CD8-positive, alpha-beta T cell (primary cell): ENCODE measurements at regions of chr22 and their contacts with region 1.

Region 1: GRCh38 chr22:37199103-37199759 is 11.2 kb upstream of the C1QTNF6 start:
- DNase-seq: peak; percentile 96 to 100 (median 99)
- ATAC-seq: peak; percentile 92
- H3K4me3 ChIP-seq: peak overlapping the region; percentile 57 to 73
- H3K4me3 Mint-ChIP-seq: peak overlapping the region; percentile 85
- H3K27ac ChIP-seq: peak overlapping the region; percentile 67 to 95
- H3K27ac Mint-ChIP-seq: peak overlapping the region; percentile 95
- H3K4me1 ChIP-seq: peaks cover 61% of the 10 kb centered on the region
- H3K4me1 Mint-ChIP-seq: peaks cover 70% of the 10 kb centered on the region
- H3K27me3 ChIP-seq: no peaks in the 10 kb centered on the region
- H3K27me3 Mint-ChIP-seq: no peaks in the 10 kb centered on the region
- CTCF ChIP-seq: peak; percentile 87

Region 2: DNA sequence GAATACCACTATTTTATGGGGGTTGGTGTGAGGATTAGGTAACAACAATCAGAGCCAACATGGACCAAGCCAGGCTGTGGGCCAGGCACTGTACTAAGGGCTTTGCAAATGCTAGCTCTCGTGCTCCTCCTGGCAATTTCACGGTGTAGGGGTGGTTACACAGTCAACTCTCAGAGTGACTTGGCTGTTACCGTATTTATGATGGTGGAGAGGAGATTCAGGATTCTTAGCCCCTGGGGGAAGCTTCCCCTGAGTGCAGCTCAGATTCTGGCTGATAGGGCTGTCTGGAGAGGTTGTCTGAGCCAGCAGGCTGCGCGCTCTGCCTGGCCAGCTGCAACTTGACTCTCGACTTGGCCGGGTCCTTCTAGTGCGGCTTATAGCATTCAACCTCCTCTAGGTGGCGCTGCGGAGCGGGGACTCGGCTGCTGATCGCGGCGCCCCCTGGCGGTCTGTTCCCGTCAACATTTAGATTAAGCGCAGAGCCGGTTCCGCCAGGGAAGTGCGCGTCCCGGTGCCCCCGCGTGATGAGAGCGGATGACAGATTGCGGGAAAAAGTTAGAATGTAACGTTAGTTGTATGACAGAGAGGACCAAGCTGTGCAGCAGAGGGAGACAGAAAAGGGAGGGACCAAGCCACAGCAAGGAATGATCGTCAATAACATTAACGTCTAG is 343.0 kb before region 1 on chr22:
- CTCF ChIA-PET with region 1: no interaction called
- POLR2A ChIA-PET with region 1: no interaction called
- intact Hi-C with region 1: loop called (anchors 1 to 5 kb)
- DNase-seq: peak; percentile 86 to 99 (median 94)
- ATAC-seq: peak; percentile 78
- H3K4me3 ChIP-seq: no peak overlapping the region
- H3K4me3 Mint-ChIP-seq: peak overlapping the region; percentile 13
- H3K27ac ChIP-seq: no peak overlapping the region
- H3K27ac Mint-ChIP-seq: no peak overlapping the region
- H3K4me1 ChIP-seq: peaks cover 16% of the 10 kb centered on the region
- H3K4me1 Mint-ChIP-seq: peaks cover 13% of the 10 kb centered on the region
- H3K27me3 ChIP-seq: no peaks in the 10 kb centered on the region
- H3K27me3 Mint-ChIP-seq: no peaks in the 10 kb centered on the region
- CTCF ChIP-seq: peak; percentile 100

Region 3: DNA sequence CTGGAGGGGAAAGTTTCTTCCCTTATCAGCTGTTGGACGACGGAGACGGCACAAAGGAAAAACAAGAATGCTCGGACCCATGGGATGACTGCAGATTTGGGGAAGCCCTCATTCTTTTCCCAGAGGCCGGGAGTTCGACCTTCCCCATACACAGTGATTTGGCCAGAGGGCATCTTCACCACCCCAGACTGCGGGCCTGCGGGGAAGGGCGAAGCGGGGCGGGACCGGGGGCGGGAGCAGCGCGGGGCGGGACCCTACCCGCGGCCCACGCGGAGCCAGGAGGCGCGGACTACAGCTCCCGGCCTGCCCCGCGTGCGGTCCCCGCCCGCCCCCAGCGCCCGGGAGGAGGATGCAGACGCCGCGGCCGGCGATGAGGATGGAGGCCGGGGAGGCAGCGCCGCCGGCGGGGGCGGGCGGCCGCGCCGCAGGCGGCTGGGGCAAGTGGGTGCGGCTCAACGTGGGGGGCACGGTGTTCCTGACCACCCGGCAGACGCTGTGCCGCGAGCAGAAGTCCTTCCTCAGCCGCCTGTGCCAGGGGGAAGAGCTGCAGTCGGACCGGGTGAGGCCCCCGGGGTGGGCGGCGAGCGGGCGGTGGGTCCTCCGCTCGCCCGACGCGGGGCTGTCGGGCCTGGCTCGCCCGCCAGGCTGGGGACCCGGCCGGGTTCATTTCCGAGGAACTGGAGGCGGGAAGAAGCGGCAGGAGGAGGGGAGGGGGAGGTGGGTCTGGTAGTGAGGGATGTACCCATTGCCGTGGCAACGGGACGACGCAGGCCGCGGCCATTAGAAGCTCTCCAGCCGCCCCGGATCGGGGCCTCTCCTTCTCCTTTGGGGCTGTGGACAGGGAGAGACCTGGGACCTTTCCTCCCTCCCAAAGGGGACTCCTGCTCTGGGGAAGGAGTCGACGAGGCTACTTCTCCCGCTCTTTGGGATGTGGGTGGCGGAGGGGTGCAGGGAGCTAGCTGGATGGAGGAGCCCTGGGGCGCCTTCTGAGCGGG is 147.5 kb before region 1 on chr22 and contains the start of gene KCTD17:
- CTCF ChIA-PET with region 1: interaction called, 3 read pairs
- POLR2A ChIA-PET with region 1: interaction called, 5 read pairs
- intact Hi-C with region 1: loop called in 1 of 2 experiments (anchors 1 kb)
- DNase-seq: peak; percentile 40 to 84 (median 72)
- ATAC-seq: peak; percentile 100
- H3K4me3 ChIP-seq: peak within 1 kb of the TSS; percentile 46 to 65
- H3K4me3 Mint-ChIP-seq: peak within 1 kb of the TSS; percentile 84
- H3K27ac ChIP-seq: peak within 1 kb of the TSS in 1 of 2 experiments; percentile 37
- H3K27ac Mint-ChIP-seq: no peak within 1 kb of the TSS
- H3K4me1 ChIP-seq: peaks cover 11% of the 10 kb centered on the region
- H3K4me1 Mint-ChIP-seq: peaks cover 10% of the 10 kb centered on the region
- H3K27me3 ChIP-seq: no peaks in the 10 kb centered on the region
- H3K27me3 Mint-ChIP-seq: no peaks in the 10 kb centered on the region
- CTCF ChIP-seq: no peak
- total RNA-seq, gene KCTD17: 18.6 to 22.8 TPM

Region 4: GRCh38 chr22:37148742-37149665 is 50.2 kb before region 1 on chr22:
- CTCF ChIA-PET with region 1: interaction called, 52 read pairs
- POLR2A ChIA-PET with region 1: interaction called, 12 read pairs
- intact Hi-C with region 1: loop called in 1 of 2 experiments (anchors 1 kb)
- DNase-seq: peak in 1 of 9 experiments; percentile 36
- ATAC-seq: no peak
- H3K4me3 ChIP-seq: peak overlapping the region; percentile 91 to 98
- H3K4me3 Mint-ChIP-seq: peak overlapping the region; percentile 96
- H3K27ac ChIP-seq: peak overlapping the region; percentile 84 to 94
- H3K27ac Mint-ChIP-seq: peak overlapping the region; percentile 96
- H3K4me1 ChIP-seq: peaks cover 60% of the 10 kb centered on the region
- H3K4me1 Mint-ChIP-seq: peaks cover 61% of the 10 kb centered on the region
- H3K27me3 ChIP-seq: no peaks in the 10 kb centered on the region
- H3K27me3 Mint-ChIP-seq: no peaks in the 10 kb centered on the region
- CTCF ChIP-seq: no peak

Region 5: GRCh38 chr22:37186228-37186996 is 12.8 kb before region 1 on chr22:
- CTCF ChIA-PET with region 1: interaction called, 10 read pairs
- POLR2A ChIA-PET with region 1: interaction called, 7 read pairs
- intact Hi-C with region 1: loop called (anchors 1 kb)
- DNase-seq: peak in 7 of 9 experiments; percentile 41 to 93 (median 60)
- ATAC-seq: peak; percentile 89
- H3K4me3 ChIP-seq: peak overlapping the region; percentile 13 to 16
- H3K4me3 Mint-ChIP-seq: peak overlapping the region; percentile 72
- H3K27ac ChIP-seq: peak overlapping the region; percentile 38 to 47
- H3K27ac Mint-ChIP-seq: peak overlapping the region; percentile 80
- H3K4me1 ChIP-seq: peaks cover 65% of the 10 kb centered on the region
- H3K4me1 Mint-ChIP-seq: peaks cover 60% of the 10 kb centered on the region
- H3K27me3 ChIP-seq: no peaks in the 10 kb centered on the region
- H3K27me3 Mint-ChIP-seq: no peaks in the 10 kb centered on the region
- CTCF ChIP-seq: no peak

Region 6: DNA sequence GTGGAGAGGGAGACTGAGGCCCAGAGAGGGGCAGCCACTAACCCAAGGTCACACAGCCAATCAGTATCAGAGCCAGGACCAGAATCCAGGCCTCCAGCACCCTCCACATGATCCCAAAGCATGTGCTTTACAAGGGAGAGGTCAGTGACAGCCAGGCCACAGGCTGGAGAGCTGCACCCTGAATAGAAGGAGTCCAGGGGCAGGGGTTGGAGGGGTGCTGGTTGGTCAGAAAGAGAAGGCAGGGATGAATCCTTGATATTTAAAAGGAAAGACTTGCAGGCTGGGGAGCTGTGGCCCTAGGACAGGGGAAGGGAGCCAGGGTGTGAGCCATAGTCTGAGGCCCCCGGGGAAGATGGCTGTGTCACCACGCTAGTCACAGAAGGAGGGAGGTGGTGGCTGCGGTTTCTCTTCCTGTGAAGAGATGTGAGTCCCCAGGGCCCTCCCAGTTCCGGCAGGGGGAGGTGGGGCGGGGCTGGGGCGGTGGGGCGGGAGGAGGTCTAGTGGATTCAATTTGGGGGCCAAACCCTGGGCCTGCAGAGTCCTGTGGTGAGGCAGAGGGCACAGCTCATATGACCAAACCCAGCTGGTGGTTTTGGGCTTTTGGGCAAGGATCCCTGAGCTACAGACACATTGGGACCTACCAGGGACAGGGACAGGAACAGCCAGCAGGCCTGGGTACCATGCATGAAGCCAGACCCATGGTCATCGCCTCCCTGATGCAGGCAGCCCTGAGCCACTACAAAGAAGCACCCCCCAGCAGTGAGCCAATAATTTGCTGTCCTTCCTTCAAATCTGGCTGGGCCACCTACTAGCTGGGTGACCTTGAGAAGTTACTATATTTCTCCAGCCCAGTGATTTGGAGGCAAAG is 30.8 kb after region 1 on chr22:
- CTCF ChIA-PET with region 1: interaction called, 45 read pairs
- POLR2A ChIA-PET with region 1: interaction called, 44 read pairs
- intact Hi-C with region 1: loop called (anchors 1 kb)
- DNase-seq: peak; percentile 80 to 97 (median 91)
- ATAC-seq: peak; percentile 68
- H3K4me3 ChIP-seq: peak overlapping the region; percentile 36 to 52
- H3K4me3 Mint-ChIP-seq: peak overlapping the region; percentile 80
- H3K27ac ChIP-seq: peak overlapping the region; percentile 75 to 92
- H3K27ac Mint-ChIP-seq: peak overlapping the region; percentile 100
- H3K4me1 ChIP-seq: peaks cover 94% of the 10 kb centered on the region
- H3K4me1 Mint-ChIP-seq: peaks cover 91% of the 10 kb centered on the region
- H3K27me3 ChIP-seq: no peaks in the 10 kb centered on the region
- H3K27me3 Mint-ChIP-seq: no peaks in the 10 kb centered on the region
- CTCF ChIP-seq: no peak

Region 7: DNA sequence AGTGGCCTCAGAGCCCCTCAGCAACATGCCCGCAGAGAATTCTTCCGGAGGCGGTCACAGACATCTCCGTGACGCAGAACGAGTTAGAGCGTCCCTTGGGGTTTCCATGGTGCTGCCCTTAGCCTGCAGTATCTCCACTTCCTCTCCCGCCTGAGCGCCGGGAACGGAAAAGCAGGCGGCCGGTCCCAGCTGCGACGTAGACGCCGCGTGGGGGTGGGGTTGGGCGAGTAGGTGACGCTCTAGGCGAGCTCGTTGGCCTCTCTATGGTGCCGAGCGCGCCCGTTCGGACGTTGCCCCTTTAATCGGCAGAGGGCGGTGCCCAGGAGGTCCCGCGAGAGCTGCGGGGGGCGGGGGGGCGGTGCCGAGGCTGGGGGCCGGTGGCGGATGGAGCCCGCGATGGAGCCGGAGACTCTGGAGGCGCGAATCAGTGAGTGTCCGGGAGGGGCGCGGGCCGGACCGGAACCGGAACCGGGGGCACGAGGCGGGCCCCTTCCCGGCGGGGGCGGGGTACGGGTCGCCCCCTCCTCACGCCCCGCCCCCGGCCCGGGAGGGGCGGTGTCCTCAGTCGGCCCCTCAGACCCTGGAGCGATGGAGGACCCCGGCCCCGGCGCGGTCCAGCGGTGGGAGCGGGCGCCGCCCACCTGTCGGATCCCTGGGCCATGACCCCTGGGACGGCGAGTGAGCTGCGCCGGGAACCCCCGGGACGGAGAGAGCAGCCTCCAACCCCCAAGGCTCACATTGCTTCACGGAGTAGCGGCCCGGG is 409.4 kb after region 1 on chr22 and contains the start of gene GGA1:
- CTCF ChIA-PET with region 1: no interaction called
- POLR2A ChIA-PET with region 1: no interaction called
- intact Hi-C with region 1: loop called in 1 of 2 experiments (anchors 1 kb)
- DNase-seq: peak; percentile 89 to 100 (median 95)
- ATAC-seq: peak; percentile 76
- H3K4me3 ChIP-seq: peak within 1 kb of the TSS; percentile 71 to 84
- H3K4me3 Mint-ChIP-seq: peak within 1 kb of the TSS; percentile 89
- H3K27ac ChIP-seq: peak within 1 kb of the TSS; percentile 84 to 99
- H3K27ac Mint-ChIP-seq: peak within 1 kb of the TSS; percentile 92
- H3K4me1 ChIP-seq: peaks cover 58% of the 10 kb centered on the region
- H3K4me1 Mint-ChIP-seq: peaks cover 56% of the 10 kb centered on the region
- H3K27me3 ChIP-seq: no peaks in the 10 kb centered on the region
- H3K27me3 Mint-ChIP-seq: no peaks in the 10 kb centered on the region
- CTCF ChIP-seq: no peak
- total RNA-seq, gene GGA1: 66.0 to 69.1 TPM